Activated CD8-positive, alpha-beta T cell treated with anti-CD3 and anti-CD28 coated beads, Interleukin-2, amount 10 ng/mL, durations not matched to agents 7 days and 5 days (primary cell): ENCODE measurements at regions of chr1 and their contacts with region 1.

Region 1: DNA sequence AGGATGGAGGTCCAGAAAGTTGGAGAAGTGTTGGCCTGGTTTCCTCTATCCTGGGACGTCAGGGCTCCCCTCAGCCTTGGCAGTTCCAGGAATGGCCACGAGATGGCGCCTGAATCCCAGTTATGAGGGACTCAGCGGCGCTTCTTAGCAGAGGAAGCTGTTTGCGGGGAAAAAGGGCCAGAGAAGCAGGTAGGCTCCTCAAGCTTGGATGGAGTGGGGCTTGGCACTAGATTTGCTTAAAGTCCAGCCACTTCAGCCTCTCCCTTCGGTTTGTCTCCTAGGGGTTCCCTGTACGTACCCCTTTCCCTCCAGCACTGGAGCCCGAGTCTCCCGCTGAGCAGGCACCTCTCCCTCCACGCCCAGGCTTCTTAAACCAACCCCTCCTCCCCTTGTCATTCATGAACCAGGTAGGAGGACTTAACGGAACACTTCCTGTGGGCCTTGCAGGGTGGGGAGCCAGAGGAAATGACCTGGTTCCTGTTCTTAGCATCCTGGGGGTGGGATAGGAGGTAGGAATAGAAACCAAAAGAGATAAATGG is 32.0 kb upstream of the TENT5B start:
- DNase-seq: peak; percentile 92
- ATAC-seq: peak; percentile 91
- H3K4me3 Mint-ChIP-seq: peak overlapping the region; percentile 73
- H3K27ac Mint-ChIP-seq: peak overlapping the region; percentile 78
- H3K4me1 Mint-ChIP-seq: peaks cover 22% of the 10 kb centered on the region
- H3K27me3 Mint-ChIP-seq: peaks cover 3% of the 10 kb centered on the region

Region 2: DNA sequence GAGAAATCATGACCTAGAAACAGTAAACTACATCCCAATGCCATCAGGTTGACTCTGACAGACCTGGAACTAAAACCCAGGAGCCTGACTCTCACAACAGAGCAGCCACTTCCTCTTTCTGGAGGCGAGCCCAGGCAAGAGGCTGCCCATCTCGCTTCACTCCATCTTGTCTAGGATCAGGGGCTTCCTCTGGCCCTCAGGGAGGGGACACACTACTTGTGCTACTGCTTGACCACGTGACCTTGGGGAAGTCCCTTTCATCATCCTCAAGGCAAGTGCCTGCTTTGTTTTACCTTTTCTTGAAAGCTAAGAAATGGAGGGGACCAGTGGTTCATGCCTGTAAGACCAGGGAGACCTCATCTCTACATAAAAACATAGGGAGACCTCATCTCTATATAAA is 29.4 kb before region 1 on chr1:
- CTCF ChIA-PET with region 1: interaction called, 25 read pairs
- POLR2A ChIA-PET with region 1: no interaction called
- DNase-seq: no peak
- ATAC-seq: no peak
- H3K4me3 Mint-ChIP-seq: no peak overlapping the region
- H3K27ac Mint-ChIP-seq: no peak overlapping the region
- H3K4me1 Mint-ChIP-seq: peaks cover 8% of the 10 kb centered on the region
- H3K27me3 Mint-ChIP-seq: peaks cover 24% of the 10 kb centered on the region

Region 3: GRCh38 chr1:27057801-27058625 is 13.3 kb after region 1 on chr1:
- CTCF ChIA-PET with region 1: interaction called, 58 read pairs
- POLR2A ChIA-PET with region 1: no interaction called
- DNase-seq: no peak
- ATAC-seq: no peak
- H3K4me3 Mint-ChIP-seq: no peak overlapping the region
- H3K27ac Mint-ChIP-seq: no peak overlapping the region
- H3K4me1 Mint-ChIP-seq: no peaks in the 10 kb centered on the region
- H3K27me3 Mint-ChIP-seq: no peaks in the 10 kb centered on the region

Region 4: DNA sequence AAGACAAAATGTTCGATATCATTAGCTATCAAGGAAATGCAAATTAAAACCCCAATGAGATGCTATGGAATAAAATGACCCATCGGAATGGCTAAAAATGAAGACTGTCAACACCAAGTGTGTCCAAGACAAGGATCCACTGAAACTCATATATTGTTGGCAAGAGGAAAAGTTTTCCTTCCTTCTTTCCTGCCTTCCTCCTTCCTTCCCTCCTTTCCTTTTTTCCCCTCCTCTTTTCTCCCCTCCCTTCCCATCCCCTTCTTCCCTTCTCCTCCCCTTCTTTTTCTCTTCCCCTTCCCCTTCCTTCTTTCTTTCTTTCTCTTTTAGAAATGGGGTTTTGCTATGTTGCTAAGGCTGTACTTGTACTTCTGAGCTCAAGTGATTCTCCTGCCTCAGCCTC is 32.1 kb after region 1 on chr1:
- CTCF ChIA-PET with region 1: interaction called, 11 read pairs
- POLR2A ChIA-PET with region 1: no interaction called
- DNase-seq: no peak
- ATAC-seq: no peak
- H3K4me3 Mint-ChIP-seq: no peak overlapping the region
- H3K27ac Mint-ChIP-seq: no peak overlapping the region
- H3K4me1 Mint-ChIP-seq: no peaks in the 10 kb centered on the region
- H3K27me3 Mint-ChIP-seq: peaks cover 6% of the 10 kb centered on the region

Region 5: GRCh38 chr1:27111626-27112573 is 67.2 kb after region 1 on chr1:
- CTCF ChIA-PET with region 1: interaction called, 55 read pairs
- POLR2A ChIA-PET with region 1: interaction called, 4 read pairs
- DNase-seq: peak; percentile 83
- ATAC-seq: peak; percentile 95
- H3K4me3 Mint-ChIP-seq: peak overlapping the region; percentile 59
- H3K27ac Mint-ChIP-seq: peak overlapping the region; percentile 91
- H3K4me1 Mint-ChIP-seq: peaks cover 76% of the 10 kb centered on the region
- H3K27me3 Mint-ChIP-seq: no peaks in the 10 kb centered on the region

Region 6: GRCh38 chr1:27192039-27192529 is 147.4 kb after region 1 on chr1:
- CTCF ChIA-PET with region 1: interaction called, 14 read pairs
- POLR2A ChIA-PET with region 1: no interaction called
- DNase-seq: no peak
- ATAC-seq: no peak
- H3K4me3 Mint-ChIP-seq: no peak overlapping the region
- H3K27ac Mint-ChIP-seq: no peak overlapping the region
- H3K4me1 Mint-ChIP-seq: no peaks in the 10 kb centered on the region
- H3K27me3 Mint-ChIP-seq: peaks cover 6% of the 10 kb centered on the region